ENCODE measurements at regions of chr6 and their contacts with region 1.

Region 1: DNA sequence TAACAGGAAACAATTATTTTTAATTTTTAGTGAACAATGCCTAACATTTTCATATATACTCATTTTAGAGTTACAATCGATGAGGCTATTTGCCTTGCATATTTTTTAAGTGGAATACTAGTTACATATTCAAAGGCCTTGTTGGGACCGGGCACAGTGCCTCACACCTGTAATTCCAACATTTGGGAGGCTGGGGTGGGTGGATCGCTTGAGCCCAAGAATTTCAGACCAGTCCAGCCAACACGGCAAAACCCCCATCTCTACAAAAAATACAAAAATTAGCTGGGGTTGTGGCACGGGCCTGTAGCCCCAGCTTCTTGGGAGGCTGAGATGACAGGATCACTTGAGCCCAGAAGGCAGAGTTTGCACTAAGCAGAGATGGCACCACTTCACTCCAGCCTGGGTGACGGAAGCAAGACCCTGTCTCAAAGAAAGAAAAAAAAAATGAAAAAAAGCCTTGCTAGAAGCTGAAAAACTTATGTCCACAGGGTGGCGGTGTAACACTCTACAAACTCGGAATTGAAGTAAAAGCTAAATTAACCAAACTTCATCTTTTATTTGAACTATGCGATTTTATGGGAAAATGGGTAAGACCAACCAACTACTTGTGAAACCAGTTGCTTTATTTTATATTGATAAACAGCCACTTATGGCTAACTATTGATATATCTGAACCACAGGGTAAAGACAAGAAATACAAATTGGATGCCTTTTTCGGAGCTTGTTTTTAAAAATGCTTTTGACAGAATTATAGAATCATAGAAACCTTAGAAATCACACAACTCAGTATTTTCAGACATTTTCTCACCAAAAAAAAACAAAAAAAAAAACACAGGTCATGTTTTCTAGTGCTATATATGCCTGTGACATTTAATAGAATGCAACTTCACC is 24.1 kb upstream of the ROS1 start:
- DNase-seq: peak; percentile 84
- H3K4me3 ChIP-seq: no peak overlapping the region
- H3K27ac ChIP-seq: no peak overlapping the region
- H3K4me1 ChIP-seq: peaks cover 6% of the 10 kb centered on the region
- H3K27me3 ChIP-seq: peaks cover 15 to 30% of the 10 kb centered on the region in 2 experiments
- CTCF ChIP-seq: peak; percentile 41 to 48
- POLR2A ChIP-seq: no peak

Region 2: DNA sequence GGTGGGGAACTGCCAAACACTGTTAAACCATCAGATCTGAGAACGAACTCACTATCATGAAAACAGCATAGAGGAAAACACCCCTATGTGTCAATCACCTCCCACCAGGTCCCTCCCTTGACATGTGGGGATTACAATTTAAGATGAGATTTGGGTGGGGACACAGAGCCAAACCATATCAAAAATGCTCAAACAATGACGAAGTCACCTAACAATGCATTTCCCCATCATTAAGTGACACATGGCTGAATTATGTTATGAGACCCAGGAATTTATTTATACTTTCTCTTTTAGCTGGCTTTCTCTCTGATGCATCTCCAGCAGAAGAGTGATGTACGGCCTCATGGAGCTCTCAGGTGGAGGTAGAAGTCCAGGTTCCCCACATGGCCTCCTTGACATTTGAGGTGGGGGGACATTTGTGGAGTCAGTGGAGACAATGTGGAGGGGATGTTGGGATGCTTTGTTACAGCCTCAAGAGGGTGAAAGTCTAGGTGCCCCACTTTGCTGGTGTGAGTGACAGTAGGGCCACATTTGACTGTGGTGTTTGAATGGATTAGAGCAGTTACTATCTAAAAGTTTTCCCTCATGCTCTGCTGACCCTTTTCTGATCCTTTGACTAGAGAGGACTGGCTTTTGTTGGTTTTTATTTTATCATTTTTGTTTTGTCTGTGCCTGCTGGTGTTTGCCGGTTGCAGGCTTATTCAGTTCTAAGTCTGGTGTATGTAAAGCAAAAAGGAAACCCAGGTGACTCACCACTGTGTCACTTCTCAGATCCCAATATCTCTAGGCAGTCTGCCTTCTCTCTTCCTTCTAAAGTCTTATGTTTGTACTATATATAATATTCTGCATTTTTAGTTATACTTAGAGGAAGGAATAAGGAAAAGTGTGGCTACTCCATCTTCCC is 14.2 kb after region 1 on chr6:
- CTCF ChIA-PET with region 1: interaction called, 30 read pairs
- POLR2A ChIA-PET with region 1: no interaction called
- dilution Hi-C with region 1: no loop called
- intact Hi-C with region 1: no loop called
- DNase-seq: peak; percentile 69
- H3K4me3 ChIP-seq: peak overlapping the region in 1 of 3 experiments; percentile 1
- H3K27ac ChIP-seq: peak overlapping the region; percentile 81
- H3K4me1 ChIP-seq: peaks cover 25% of the 10 kb centered on the region
- H3K27me3 ChIP-seq: no peaks in the 10 kb centered on the region
- CTCF ChIP-seq: no peak
- POLR2A ChIP-seq: no peak

Region 3: GRCh38 chr6:117521791-117522502 is 72.2 kb after region 1 on chr6:
- CTCF ChIA-PET with region 1: interaction called, 11 read pairs
- POLR2A ChIA-PET with region 1: no interaction called
- dilution Hi-C with region 1: no loop called
- intact Hi-C with region 1: no loop called
- DNase-seq: peak; percentile 47
- H3K4me3 ChIP-seq: no peak overlapping the region
- H3K27ac ChIP-seq: peak overlapping the region; percentile 32
- H3K4me1 ChIP-seq: peaks cover 22% of the 10 kb centered on the region
- H3K27me3 ChIP-seq: no peaks in the 10 kb centered on the region
- CTCF ChIP-seq: no peak
- POLR2A ChIP-seq: no peak

Region 4: GRCh38 chr6:117555882-117556498 is 106.2 kb after region 1 on chr6:
- CTCF ChIA-PET with region 1: interaction called, 333 read pairs
- POLR2A ChIA-PET with region 1: no interaction called
- dilution Hi-C with region 1: no loop called
- intact Hi-C with region 1: loop called (anchors 1 kb)
- DNase-seq: peak; percentile 68
- H3K4me3 ChIP-seq: no peak overlapping the region
- H3K27ac ChIP-seq: no peak overlapping the region
- H3K4me1 ChIP-seq: peaks cover 25% of the 10 kb centered on the region
- H3K27me3 ChIP-seq: no peaks in the 10 kb centered on the region
- CTCF ChIP-seq: peak; percentile 45 to 59
- POLR2A ChIP-seq: no peak

Region 5: DNA sequence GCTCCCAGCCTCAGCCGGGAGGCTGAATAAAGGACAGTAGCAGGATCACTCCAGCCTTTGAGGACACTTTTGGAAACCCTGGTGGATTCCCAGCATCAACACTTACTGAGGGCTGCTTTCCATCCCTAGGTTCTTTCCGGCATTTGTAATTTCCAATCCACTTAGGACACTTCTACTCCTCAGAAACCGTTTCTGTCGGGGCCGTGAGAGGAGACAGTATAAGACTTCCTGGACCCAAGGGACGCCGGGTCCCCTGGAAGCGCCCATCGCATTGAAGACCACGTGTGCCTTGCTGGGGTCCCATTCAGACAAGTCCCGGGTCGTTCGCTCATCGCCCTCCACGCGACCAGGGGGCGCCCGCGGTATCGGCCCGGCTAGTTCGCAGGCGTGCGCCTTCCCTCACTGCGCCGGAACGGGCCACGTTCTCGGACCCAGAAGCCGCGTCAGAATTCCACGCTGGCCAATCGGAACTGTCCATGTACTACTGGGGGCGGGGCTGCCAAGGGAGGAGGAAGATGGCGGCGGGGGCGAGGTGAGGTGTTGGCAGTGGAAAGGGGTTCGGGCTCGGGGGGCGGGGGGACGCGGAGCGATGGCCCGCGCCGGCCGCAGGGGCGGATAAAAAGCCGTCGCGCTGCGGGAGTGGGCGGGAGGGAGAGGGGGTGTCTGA is 225.3 kb after region 1 on chr6 and contains the start of gene NUS1:
- CTCF ChIA-PET with region 1: no interaction called
- POLR2A ChIA-PET with region 1: no interaction called
- dilution Hi-C with region 1: no loop called
- intact Hi-C with region 1: loop called (anchors 1 kb)
- DNase-seq: peak; percentile 97
- H3K4me3 ChIP-seq: peak within 1 kb of the TSS; percentile 33 to 82 (median 75)
- H3K27ac ChIP-seq: peak within 1 kb of the TSS; percentile 52
- H3K4me1 ChIP-seq: peaks cover 21% of the 10 kb centered on the region
- H3K27me3 ChIP-seq: no peaks in the 10 kb centered on the region
- CTCF ChIP-seq: peak; percentile 86 to 88
- POLR2A ChIP-seq: no peak
- total RNA-seq, gene NUS1: 33.4 and 34.3 TPM in 2 replicates

Measured in endothelial cell of umbilical vein (primary cell).